Dorsolateral prefrontal cortex (tissue), 120 donors: ENCODE measurements at regions of chr13 and their contacts with region 1.

Region 1: DNA sequence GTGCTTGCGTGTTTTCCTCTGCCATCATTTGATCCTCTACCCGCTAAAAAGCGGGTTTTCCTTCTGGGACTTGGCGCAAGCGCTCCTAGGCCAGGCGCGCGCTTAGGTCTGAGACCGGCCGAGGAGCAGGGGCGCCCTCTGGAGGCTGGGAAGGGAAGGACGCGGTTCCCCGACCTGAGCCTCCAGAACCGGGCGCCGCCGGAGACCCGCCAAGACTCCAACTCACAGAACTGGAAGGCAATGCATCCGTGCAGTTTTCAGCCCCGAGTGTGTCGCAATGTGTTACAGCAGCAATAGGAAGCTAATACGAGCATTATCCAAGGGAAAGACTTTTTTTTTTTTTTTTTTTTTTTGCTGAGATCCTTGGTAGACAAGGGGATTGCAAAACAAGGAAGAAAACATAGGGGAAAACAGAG is 190.9 kb downstream of the COL4A1 start:
- DNase-seq: no peak
- H3K4me3 ChIP-seq: no peak overlapping the region
- H3K27ac ChIP-seq: no peak overlapping the region
- H3K27me3 ChIP-seq: peaks cover 0 to 16% (median 0%) of the 10 kb centered on the region in 45 donors
- CTCF ChIP-seq: peak in 49 of 56 donors; percentile 19 to 59 (median 36)

Region 2: GRCh38 chr13:110166598-110166997 is 50.5 kb after region 1 on chr13:
- intact Hi-C with region 1: loop called in 1 of 2 experiments (anchors 2 kb)
- DNase-seq: no peak
- H3K4me3 ChIP-seq: no peak overlapping the region
- H3K27ac ChIP-seq: no peak overlapping the region
- H3K27me3 ChIP-seq: peaks cover 0 to 3% (median 0%) of the 10 kb centered on the region in 45 donors
- CTCF ChIP-seq: no peak